Activated B cell treated with CpG ODN at 0.5 μM for 24 hours (primary cell): ENCODE measurements at regions of chr6 and their contacts with region 1.

Region 1: DNA sequence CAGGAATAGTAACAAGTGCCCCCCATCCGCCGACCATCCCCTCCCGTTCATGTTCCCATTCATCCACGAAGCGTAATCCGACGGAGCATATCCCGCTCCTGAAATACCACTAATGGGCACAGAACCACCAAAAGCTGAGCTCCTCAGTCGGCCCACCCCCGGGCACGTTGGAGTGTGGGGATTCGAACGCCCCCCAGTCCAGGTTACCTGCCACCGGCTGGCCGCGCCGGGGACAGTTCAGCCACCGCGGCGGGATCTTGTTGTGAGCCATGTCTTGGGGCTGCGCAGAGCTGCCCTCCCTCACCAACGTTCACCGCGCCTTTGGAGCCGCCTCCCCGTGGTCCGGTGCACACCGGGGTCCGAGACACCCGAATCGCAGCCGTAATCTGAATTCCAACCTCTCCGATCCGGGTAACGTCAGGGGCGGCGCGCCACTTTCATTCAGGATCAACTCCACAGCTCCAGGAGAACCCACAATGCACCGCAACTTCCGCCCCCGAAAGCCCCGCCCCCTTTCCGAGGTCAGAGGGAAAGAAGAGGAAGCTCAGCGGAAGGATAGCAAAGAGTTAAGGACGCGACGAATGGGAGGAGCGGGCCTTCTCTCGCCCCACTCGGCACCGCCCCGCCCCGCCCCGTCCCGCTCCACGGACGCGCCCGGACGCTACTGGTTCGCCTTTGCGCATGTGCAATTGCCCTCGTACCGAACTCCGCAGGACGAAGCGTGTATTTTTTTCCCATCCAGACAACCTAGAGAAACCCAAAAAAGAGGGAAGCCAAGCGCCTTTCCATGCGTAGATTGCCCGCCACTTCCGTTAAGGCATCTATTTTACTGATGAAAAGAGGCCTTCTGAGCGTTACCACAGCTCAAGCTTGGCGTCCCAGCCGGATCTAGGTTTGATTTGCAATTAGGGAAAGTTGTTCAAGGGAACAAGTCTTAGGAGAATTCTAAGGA is at the start of gene RNGTT:
- DNase-seq: peak; percentile 96
- ATAC-seq: peak; percentile 100
- H3K4me3 Mint-ChIP-seq: peak within 1 kb of the TSS; percentile 99
- H3K27ac Mint-ChIP-seq: peak within 1 kb of the TSS; percentile 95
- H3K4me1 Mint-ChIP-seq: peaks cover 42% of the 10 kb centered on the region
- H3K27me3 Mint-ChIP-seq: no peaks in the 10 kb centered on the region
- CTCF ChIP-seq: no peak
- total RNA-seq, gene RNGTT: 24.8 and 25.9 TPM in 2 replicates

Region 2: DNA sequence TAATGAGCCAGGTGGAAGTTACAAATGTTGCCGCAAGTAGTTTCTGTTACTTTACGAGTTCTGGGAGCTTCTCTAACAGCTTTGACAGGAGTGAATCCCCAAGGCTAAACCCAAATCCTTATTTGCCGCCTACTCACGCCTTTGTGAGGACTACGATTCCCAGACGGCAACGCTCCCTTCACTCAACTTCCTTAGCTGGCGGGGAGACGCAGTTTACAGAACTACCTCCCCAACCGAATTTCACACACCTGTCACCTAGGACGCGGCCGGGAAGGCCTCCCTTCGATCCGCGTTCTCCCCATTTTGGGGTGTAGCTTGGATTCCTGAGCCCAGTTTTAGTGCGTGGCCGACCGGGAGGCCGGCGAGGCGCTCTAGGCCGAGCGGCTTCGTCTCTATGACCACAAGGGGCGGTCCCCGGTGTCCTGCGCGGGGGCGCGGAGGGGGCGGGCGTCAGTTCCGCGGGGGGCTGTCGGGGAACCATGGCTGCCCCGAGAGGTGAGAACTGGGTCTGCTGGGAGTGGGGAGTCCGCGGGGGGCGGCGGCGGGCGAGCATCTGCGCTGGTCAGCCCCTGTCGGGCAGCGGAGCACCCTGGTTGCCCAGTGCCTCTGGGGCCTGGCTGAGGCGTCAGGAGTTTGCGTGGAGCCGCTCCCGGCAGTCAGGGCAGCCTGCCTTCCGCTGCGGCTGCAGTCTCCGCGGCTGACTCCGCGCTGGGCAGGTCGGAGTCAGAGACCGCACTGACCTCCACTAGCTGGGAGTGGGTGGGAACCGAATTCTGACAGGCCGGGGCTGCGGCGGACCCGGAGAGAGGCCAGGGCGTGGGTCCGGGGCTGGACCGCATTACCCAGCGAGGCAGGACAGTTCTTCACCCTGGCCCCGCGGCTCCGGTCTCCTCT is 1490.6 kb before region 1 on chr6 and contains the start of gene SLC35A1:
- CTCF ChIA-PET with region 1: no interaction called
- POLR2A ChIA-PET with region 1: no interaction called
- intact Hi-C with region 1: loop called (anchors 1 kb)
- DNase-seq: peak; percentile 88
- ATAC-seq: peak; percentile 97
- H3K4me3 Mint-ChIP-seq: peak within 1 kb of the TSS; percentile 97
- H3K27ac Mint-ChIP-seq: peak within 1 kb of the TSS; percentile 98
- H3K4me1 Mint-ChIP-seq: peaks cover 12% of the 10 kb centered on the region
- H3K27me3 Mint-ChIP-seq: peaks cover 6% of the 10 kb centered on the region
- CTCF ChIP-seq: no peak
- total RNA-seq, gene SLC35A1: 7.5 and 8.7 TPM in 2 replicates

Region 3: DNA sequence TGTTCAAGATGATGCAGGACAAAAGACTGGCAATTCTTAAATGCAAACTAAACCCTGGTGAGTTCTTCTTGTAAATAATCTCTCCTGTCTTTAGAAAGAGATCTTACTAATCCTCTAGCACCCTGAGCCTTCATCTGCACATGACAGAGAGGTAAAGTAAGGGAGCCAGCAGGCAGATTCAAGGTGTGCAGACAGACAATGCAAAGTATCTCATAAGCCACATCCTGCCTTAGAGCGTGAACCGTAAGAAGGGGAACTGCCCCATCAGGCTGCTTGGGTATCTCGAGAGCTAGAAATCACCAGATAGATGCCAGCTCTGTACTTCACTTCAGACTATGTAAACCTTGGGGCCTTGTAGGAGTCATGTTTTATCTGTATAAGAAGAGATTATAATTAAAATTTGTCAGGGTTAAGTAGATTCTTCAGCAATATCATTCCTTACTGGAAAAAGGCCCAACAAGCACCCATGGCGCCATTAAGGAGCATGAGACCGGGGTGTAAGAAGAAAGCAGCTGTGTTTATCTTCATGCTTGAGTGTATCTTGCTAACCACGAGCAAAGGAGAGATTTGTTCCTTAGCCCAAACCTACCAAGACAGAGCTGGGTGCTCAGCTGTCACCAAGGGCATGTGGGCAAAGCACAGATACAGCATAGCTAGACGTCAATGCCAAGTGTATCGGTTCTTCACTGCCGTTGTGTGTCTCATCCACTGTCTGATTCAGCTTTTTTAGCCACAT is 821.7 kb before region 1 on chr6:
- CTCF ChIA-PET with region 1: no interaction called
- POLR2A ChIA-PET with region 1: no interaction called
- intact Hi-C with region 1: loop called (anchors 1 kb)
- DNase-seq: peak; percentile 33
- ATAC-seq: peak; percentile 91
- H3K4me3 Mint-ChIP-seq: peak overlapping the region; percentile 73
- H3K27ac Mint-ChIP-seq: peak overlapping the region; percentile 96
- H3K4me1 Mint-ChIP-seq: peaks cover 65% of the 10 kb centered on the region
- H3K27me3 Mint-ChIP-seq: no peaks in the 10 kb centered on the region
- CTCF ChIP-seq: no peak

Region 4: GRCh38 chr6:89412071-89413005 is 448.9 kb after region 1 on chr6 and contains the start of gene RRAGD:
- CTCF ChIA-PET with region 1: no interaction called
- POLR2A ChIA-PET with region 1: interaction called, 6 read pairs
- intact Hi-C with region 1: loop called (anchors 2 kb)
- DNase-seq: peak; percentile 56
- ATAC-seq: peak; percentile 72
- H3K4me3 Mint-ChIP-seq: peak within 1 kb of the TSS; percentile 92
- H3K27ac Mint-ChIP-seq: peak within 1 kb of the TSS; percentile 56
- H3K4me1 Mint-ChIP-seq: peaks cover 21% of the 10 kb centered on the region
- H3K27me3 Mint-ChIP-seq: peaks cover 14% of the 10 kb centered on the region
- CTCF ChIP-seq: no peak
- total RNA-seq, gene RRAGD: 5.4 and 5.6 TPM in 2 replicates

Region 5: GRCh38 chr6:90586836-90587638 is 1623.6 kb after region 1 on chr6 and contains the start of gene MAP3K7:
- CTCF ChIA-PET with region 1: no interaction called
- POLR2A ChIA-PET with region 1: interaction called, 3 read pairs
- intact Hi-C with region 1: loop called (anchors 1 kb)
- DNase-seq: peak; percentile 91
- ATAC-seq: peak; percentile 86
- H3K4me3 Mint-ChIP-seq: peak within 1 kb of the TSS; percentile 94
- H3K27ac Mint-ChIP-seq: peak within 1 kb of the TSS; percentile 99
- H3K4me1 Mint-ChIP-seq: peaks cover 41% of the 10 kb centered on the region
- H3K27me3 Mint-ChIP-seq: peaks cover 7% of the 10 kb centered on the region
- CTCF ChIP-seq: no peak
- total RNA-seq, gene MAP3K7: 23.8 and 27.2 TPM in 2 replicates